ENCODE measurements at regions of chrX and their contacts with region 1.

Region 1: GRCh38 chrX:54639346-54640102 is 109.5 kb downstream of the GNL3L start:
- DNase-seq: peak; percentile 97
- H3K4me3 ChIP-seq: peak overlapping the region; percentile 47 to 62 (median 54)
- H3K27ac ChIP-seq: peak overlapping the region; percentile 82 to 90 (median 86)
- H3K4me1 ChIP-seq: peaks cover 0 to 7% (median 3%) of the 10 kb centered on the region in 4 donors
- H3K27me3 ChIP-seq: no peaks in the 10 kb centered on the region
- CTCF ChIP-seq: peak; percentile 50 to 67 (median 56)
- EP300 ChIP-seq: no peak
- POLR2A ChIP-seq: no peak

Region 2: DNA sequence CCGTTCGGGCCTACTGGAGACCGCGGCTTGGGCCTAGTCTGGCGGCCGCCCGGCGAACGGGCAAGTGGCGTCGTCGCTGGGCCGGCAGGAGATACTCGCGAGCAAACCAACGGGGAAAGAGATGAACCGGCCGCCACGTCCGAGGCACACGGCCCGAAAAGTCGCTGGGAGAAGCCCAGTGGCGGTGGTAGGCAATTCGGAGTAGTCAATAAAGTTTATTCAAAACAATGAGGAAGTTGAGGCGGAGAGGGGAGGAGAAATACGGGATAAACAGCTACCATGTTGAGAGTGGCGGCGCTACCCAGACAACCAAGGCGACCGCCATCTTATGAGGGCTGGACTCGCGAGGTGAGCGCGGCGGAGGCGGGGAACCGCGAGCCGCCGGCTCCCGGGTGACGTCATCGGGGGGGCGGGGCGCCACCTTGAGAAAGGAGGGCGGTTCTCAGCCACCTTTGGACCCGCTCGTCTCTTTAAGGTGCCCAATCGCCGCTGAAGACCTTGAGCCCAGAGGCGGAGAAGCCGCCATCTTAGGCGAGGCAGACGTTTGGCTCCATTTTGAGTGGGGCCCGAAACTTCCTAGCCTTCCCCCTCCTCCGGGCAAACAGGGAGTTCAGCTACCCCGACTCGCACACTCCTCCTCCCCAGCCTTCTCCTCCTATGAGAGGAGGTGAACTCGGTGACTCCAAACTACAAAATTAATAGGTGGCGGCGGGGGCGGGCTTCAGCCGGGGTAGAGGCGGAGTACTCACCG is 595.2 kb before region 1 on chrX and contains the start of gene PHF8:
- intact Hi-C with region 1: loop called (anchors 10 kb)
- DNase-seq: peak; percentile 96
- H3K4me3 ChIP-seq: peak within 1 kb of the TSS; percentile 68 to 82 (median 71)
- H3K27ac ChIP-seq: peak within 1 kb of the TSS; percentile 92 to 96 (median 94)
- H3K4me1 ChIP-seq: peaks cover 0 to 19% (median 13%) of the 10 kb centered on the region in 4 donors
- H3K27me3 ChIP-seq: no peaks in the 10 kb centered on the region
- CTCF ChIP-seq: no peak
- EP300 ChIP-seq: no peak
- POLR2A ChIP-seq: no peak
- total RNA-seq, gene PHF8: 18.5 to 28.7 (median 22.8) TPM

Region 3: GRCh38 chrX:54550821-54551220 is 88.7 kb before region 1 on chrX:
- intact Hi-C with region 1: no loop called
- DNase-seq: no peak
- H3K4me3 ChIP-seq: no peak overlapping the region
- H3K27ac ChIP-seq: no peak overlapping the region
- H3K4me1 ChIP-seq: no peaks in the 10 kb centered on the region
- H3K27me3 ChIP-seq: no peaks in the 10 kb centered on the region
- CTCF ChIP-seq: no peak
- EP300 ChIP-seq: no peak
- POLR2A ChIP-seq: no peak

Region 4: DNA sequence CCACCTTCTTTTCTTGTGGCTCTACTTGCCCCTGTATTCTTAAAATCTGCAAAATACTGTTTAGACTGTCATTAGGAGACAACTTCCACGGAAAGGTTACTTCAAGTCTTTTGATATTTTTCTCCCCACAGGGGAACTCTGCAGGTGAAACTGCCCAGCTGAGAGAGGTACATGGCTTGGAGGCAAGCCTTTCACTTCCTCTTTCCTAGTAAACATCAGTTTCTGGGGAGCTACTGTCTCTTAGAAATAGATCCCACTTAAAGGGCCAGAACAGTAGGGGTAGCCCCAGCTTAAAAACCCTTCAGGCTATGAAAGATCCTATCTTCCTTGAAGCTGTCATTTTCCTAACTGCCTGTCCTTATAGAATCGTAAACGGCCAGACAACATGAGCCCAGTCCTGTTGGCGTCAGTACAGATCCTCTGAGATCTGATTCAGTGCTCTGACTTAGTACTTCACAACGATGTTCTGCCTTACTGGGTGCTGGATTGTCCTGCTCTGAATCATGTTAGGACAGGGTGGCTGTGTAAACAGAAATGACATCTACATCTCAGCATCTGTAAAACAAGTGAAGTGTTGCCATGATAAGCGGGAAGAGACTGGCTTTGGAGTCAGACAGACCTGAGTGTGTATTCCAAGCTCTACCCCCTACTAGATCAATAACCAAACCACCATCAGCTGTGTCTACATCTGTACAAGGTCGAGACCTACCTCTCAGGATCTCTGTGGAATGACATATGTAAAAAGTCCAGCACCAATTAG is 56.5 kb after region 1 on chrX:
- intact Hi-C with region 1: no loop called
- DNase-seq: no peak
- H3K4me3 ChIP-seq: no peak overlapping the region
- H3K27ac ChIP-seq: no peak overlapping the region
- H3K4me1 ChIP-seq: no peaks in the 10 kb centered on the region
- H3K27me3 ChIP-seq: no peaks in the 10 kb centered on the region
- CTCF ChIP-seq: no peak
- EP300 ChIP-seq: no peak
- POLR2A ChIP-seq: no peak

Region 5: DNA sequence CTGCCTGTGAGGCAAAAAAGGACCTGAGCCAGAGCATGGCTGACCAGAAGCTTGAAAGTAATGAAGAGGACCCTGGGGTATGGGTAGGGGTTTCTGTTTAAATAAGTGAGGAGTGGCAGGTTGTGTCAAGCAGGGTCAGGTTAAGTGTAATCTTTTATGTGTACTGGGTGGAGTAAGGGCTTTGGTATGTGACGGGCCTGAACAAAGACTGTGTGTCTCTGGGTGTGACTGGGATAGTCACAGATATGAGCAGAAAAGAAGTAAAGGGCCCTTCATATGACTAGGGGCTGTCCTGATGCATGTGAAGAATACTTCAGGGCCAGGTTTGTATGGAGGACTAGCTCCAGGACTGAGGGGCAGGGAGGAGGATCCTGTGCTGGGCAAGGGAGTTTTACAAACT is 76.1 kb after region 1 on chrX:
- intact Hi-C with region 1: no loop called
- DNase-seq: no peak
- H3K4me3 ChIP-seq: no peak overlapping the region
- H3K27ac ChIP-seq: no peak overlapping the region
- H3K4me1 ChIP-seq: no peaks in the 10 kb centered on the region
- H3K27me3 ChIP-seq: no peaks in the 10 kb centered on the region
- CTCF ChIP-seq: no peak
- EP300 ChIP-seq: no peak
- POLR2A ChIP-seq: no peak

Region 6: GRCh38 chrX:54808605-54809483 is 169.3 kb after region 1 on chrX:
- intact Hi-C with region 1: loop called (anchors 2 kb)
- DNase-seq: peak; percentile 94
- H3K4me3 ChIP-seq: peak overlapping the region; percentile 71 to 82 (median 75)
- H3K27ac ChIP-seq: peak overlapping the region; percentile 85 to 91 (median 88)
- H3K4me1 ChIP-seq: peaks cover 10 to 21% (median 15%) of the 10 kb centered on the region in 4 donors
- H3K27me3 ChIP-seq: no peaks in the 10 kb centered on the region
- CTCF ChIP-seq: no peak
- EP300 ChIP-seq: no peak
- POLR2A ChIP-seq: no peak

Region 7: GRCh38 chrX:54999717-55000598 is 360.4 kb after region 1 on chrX and contains the start of gene APEX2:
- intact Hi-C with region 1: loop called (anchors 5 kb)
- DNase-seq: peak; percentile 96
- H3K4me3 ChIP-seq: peak within 1 kb of the TSS; percentile 55 to 68 (median 62)
- H3K27ac ChIP-seq: peak within 1 kb of the TSS; percentile 84 to 86 (median 84)
- H3K4me1 ChIP-seq: peaks cover 0 to 16% (median 10%) of the 10 kb centered on the region in 4 donors
- H3K27me3 ChIP-seq: no peaks in the 10 kb centered on the region
- CTCF ChIP-seq: no peak
- EP300 ChIP-seq: no peak
- POLR2A ChIP-seq: peak; percentile 36
- total RNA-seq, gene APEX2: 5.4 to 10.1 (median 8.9) TPM

Region 8: DNA sequence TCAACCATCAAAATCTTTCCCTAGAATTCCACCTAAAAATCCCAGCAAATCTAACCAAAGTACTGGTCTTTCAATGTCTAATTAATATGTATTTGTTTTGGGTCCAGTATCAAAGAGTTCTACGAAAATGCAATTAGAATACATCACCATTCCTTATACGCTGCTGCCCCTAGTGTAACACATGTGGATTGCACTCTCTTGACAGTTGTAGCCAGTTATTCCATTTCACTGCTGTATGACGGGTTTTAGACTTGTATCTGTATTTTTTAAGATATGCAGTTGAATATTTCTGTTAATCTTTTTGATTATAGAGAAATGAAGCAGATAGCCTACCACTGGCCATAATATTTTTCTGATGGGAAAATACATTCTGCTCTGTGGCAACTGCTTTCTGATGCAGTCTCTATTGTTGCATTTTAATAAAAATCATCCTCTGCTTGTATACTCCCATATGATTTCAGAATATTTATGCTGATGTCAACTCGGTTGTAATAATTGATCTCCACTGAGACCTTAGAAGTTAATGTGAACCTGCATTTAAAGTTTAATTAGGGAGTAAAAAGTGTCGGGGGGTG is 418.2 kb after region 1 on chrX:
- intact Hi-C with region 1: loop called (anchors 5 kb)
- DNase-seq: no peak
- H3K4me3 ChIP-seq: peak overlapping the region in 2 of 4 donors; percentile 4 to 34
- H3K27ac ChIP-seq: no peak overlapping the region
- H3K4me1 ChIP-seq: peaks cover 0 to 6% (median 0%) of the 10 kb centered on the region in 4 donors
- H3K27me3 ChIP-seq: no peaks in the 10 kb centered on the region
- CTCF ChIP-seq: peak; percentile 63 to 74 (median 71)
- EP300 ChIP-seq: no peak
- POLR2A ChIP-seq: no peak

Measured in esophagus muscularis mucosa (tissue), 4 donors.